Transverse colon (tissue), 4 donors: ENCODE measurements at regions of chr7 and their contacts with region 1.

Region 1: DNA sequence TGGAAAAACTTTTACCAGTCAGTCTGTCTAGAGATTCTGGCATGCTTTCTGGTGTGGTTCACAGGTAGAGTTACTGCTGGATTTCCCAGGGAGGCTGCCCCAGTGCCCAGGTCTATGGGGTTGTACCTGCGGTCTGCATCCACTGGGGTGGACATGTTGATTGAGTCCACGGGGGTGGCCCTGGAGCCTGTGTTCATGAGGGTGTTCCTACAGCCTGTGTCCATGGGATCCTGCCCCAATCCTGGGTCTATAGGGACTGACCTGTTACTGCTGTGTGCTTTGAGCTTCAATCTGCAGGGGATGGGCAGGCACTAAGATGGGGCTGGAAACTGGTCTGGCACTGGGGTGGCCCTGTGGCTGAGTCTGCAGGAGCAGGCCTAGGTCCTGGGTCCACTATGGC is 54.5 kb upstream of the PRPS1L1 start:
- DNase-seq: no peak
- H3K4me3 ChIP-seq: no peak overlapping the region
- H3K27ac ChIP-seq: no peak overlapping the region
- H3K4me1 ChIP-seq: peaks cover 0 to 11% (median 7%) of the 10 kb centered on the region in 4 donors
- H3K27me3 ChIP-seq: peaks cover 24% of the 10 kb centered on the region
- CTCF ChIP-seq: no peak
- EP300 ChIP-seq: no peak
- POLR2A ChIP-seq: no peak

Region 2: DNA sequence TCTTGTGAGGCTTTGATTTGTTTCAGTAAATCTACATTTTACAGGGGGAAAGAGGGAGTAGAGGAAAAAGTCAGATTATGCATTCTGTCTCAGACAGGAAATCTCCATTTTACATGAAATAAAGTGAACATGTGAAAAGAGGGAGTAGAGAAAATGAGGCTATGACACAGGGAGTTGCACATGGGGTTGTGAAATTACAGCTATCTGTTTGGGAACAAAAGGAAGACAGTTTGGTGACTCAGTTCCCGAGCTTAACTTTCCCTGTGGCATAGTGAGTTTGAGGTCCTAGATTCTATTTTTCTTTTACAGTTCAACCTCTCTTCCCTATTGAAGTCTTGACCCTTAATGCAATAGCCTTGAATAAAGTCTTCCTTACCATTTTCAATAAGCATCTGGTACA is 1137.2 kb before region 1 on chr7:
- in situ Hi-C with region 1: no loop called
- intact Hi-C with region 1: loop called (anchors 5 kb)
- DNase-seq: no peak
- H3K4me3 ChIP-seq: no peak overlapping the region
- H3K27ac ChIP-seq: no peak overlapping the region
- H3K4me1 ChIP-seq: no peaks in the 10 kb centered on the region
- H3K27me3 ChIP-seq: no peaks in the 10 kb centered on the region
- CTCF ChIP-seq: no peak
- EP300 ChIP-seq: no peak
- POLR2A ChIP-seq: no peak